Lower leg skin (tissue), 4 donors: ENCODE measurements at regions of chr11 and their contacts with region 1.

Region 1: GRCh38 chr11:129747071-129747470 is 68.6 kb upstream of the TMEM45B start:
- DNase-seq: peak in 1 of 2 donors; percentile 14
- H3K4me3 ChIP-seq: no peak overlapping the region
- CTCF ChIP-seq: no peak
- POLR2A ChIP-seq: no peak

Region 2: DNA sequence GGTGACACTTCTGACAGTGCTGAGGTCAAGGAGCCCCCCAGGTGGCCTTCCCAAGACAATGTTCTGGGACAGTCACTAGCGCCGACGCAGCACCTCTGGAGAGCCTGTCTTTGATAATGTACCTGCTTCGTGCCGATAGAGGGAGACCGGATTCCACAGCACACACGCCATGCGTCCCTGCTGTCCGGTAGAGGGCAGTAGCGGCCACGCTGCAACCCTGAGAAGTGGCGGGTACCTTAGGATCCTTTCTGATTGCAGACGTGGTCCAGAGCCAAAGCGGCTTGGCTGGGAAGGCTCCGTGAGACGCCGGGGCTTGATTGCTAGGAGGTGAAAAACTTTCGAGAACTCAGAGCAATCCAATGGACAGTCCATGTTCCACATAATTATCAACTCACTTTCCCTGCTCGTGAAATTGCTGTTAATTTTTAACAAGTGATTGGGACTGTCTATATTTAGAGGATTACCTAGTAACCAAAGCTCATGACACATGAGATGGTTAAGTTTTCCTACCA is 382.9 kb before region 1 on chr11:
- intact Hi-C with region 1: loop called (anchors 5 kb)
- DNase-seq: peak; percentile 54 to 91
- H3K4me3 ChIP-seq: no peak overlapping the region
- CTCF ChIP-seq: peak in 1 of 3 donors; percentile 85
- POLR2A ChIP-seq: no peak

Region 3: DNA sequence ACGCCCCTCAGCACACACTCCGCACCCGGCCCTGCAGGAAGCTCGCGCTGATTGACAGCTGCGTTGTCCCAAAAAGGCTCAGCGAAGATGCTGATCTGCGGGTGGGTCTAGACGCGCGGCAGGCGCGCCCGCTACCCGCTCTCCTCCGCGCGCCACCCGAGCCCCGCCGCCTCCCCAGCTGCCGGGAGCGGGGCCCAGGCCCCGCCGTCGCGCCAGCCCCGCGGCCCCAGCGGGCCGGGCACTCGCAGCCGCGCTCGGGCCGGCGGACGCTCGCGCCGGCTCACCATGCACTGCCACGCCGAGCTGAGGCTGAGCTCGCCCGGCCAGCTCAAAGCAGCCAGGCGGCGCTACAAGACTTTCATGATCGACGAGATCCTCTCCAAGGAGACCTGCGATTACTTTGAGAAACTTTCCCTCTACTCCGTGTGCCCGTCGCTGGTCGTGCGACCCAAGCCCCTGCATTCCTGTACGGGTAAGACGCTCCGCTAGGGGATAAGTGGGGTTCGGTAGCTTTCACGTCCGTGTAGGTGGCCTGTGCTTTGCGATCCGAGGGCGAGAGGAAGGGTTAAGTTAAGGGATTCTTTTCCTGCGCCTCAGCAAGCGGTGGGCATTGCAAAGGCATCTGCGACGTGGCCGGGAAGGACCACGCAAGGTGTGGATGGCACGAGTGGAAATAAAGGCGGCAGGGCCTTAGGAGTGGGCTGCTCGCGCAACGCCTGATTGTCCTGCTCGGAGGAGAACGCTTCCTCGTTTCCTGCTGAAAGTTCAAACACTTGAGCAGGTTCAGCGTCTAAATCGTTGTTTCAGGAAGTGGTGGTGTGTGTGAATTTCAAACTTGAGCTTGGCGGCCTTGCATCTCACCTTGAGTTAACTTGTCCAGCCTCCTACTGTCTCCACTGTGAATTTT is 371.1 kb before region 1 on chr11 and contains the start of gene BARX2:
- intact Hi-C with region 1: loop called (anchors 5 kb)
- DNase-seq: no peak
- H3K4me3 ChIP-seq: peak within 1 kb of the TSS; percentile 9
- CTCF ChIP-seq: no peak
- POLR2A ChIP-seq: no peak
- total RNA-seq, gene BARX2: 9.4 to 31.1 (median 14.1) TPM

Region 4: GRCh38 chr11:129625930-129626329 is 121.1 kb before region 1 on chr11:
- intact Hi-C with region 1: no loop called
- DNase-seq: no peak
- H3K4me3 ChIP-seq: no peak overlapping the region
- CTCF ChIP-seq: no peak
- POLR2A ChIP-seq: no peak